Left cardiac atrium (tissue), 4 donors: ENCODE measurements at regions of chr15 and their contacts with region 1.

Region 1: GRCh38 chr15:26561896-26562295 is 211.0 kb downstream of the GABRB3 start:
- DNase-seq: no peak
- ATAC-seq: peak in 1 of 2 donors; percentile 15

Region 2: GRCh38 chr15:26590676-26591075 is 28.8 kb after region 1 on chr15:
- intact Hi-C with region 1: no loop called
- DNase-seq: no peak
- ATAC-seq: peak in 1 of 2 donors; percentile 23

Region 3: GRCh38 chr15:26615188-26615926 is 53.5 kb after region 1 on chr15:
- intact Hi-C with region 1: loop called in 1 of 2 experiments (anchors 5 kb)
- DNase-seq: no peak
- ATAC-seq: peak; percentile 52 to 59